ENCODE measurements at regions of chr5 and their contacts with region 1.

Region 1: DNA sequence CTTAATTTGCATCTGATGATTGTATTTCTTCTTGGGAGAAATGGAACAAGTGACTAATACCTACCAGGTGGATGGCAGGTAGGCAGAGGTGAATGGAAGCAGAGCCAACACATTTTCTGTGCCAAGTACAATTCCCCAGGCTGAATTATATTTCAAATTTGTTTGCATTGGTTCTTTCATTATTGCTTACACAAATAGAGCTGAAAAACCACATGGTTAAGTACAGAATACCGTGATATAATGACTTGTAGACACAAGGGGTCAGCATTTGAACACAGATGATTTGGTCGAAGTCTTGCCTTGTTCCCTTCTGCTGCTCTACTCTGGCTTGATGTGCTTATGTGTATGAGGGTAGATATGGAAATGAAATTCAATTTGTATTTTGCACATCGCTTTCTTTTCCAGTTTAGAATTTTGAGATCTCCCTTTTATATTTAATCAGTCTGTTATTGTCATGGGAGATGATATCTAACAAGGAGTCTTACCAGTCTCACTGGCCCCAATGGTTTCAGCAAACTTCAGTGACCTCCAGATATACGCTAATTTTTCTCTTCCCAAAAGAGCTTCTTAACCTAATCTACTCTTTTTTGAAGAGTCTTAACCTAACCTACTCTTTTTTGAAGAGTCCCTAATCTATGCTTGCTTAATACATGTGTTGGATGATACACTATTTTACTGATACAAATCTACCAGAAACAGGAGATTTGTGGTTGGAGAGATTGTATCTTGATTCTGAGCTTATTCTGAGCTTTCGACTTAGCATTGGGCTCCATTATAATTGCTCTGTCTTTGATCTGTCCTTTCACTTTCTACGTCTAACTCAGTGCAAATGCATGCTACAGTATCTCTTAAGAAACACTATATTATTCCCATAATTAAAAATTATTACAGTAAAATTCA is 88.1 kb downstream of the PCSK1 start:
- DNase-seq: no peak

Region 2: GRCh38 chr5:96247097-96247701 is 97.7 kb before region 1 on chr5:
- intact Hi-C with region 1: no loop called
- DNase-seq: no peak

Region 3: GRCh38 chr5:96601811-96602244 is 256.9 kb after region 1 on chr5:
- intact Hi-C with region 1: loop called (anchors 2 kb)
- DNase-seq: no peak

Measured in cardiac septum (tissue), 1 donor.